Breast epithelium (tissue), 4 donors: ENCODE measurements at regions of chrX and their contacts with region 1.

Region 1: GRCh38 chrX:140229187-140229586 is 263.9 kb upstream of the CXorf66 start:
- DNase-seq: no peak
- H3K4me3 ChIP-seq: no peak overlapping the region
- H3K27ac ChIP-seq: no peak overlapping the region
- H3K4me1 ChIP-seq: no peaks in the 10 kb centered on the region
- H3K27me3 ChIP-seq: no peaks in the 10 kb centered on the region
- CTCF ChIP-seq: no peak
- POLR2A ChIP-seq: no peak

Region 2: GRCh38 chrX:140040430-140040829 is 188.8 kb before region 1 on chrX:
- intact Hi-C with region 1: loop called (anchors 10 kb)
- DNase-seq: no peak
- H3K4me3 ChIP-seq: no peak overlapping the region
- H3K27ac ChIP-seq: no peak overlapping the region
- H3K4me1 ChIP-seq: no peaks in the 10 kb centered on the region
- H3K27me3 ChIP-seq: peaks cover 0 to 9% of the 10 kb centered on the region in 2 donors
- CTCF ChIP-seq: no peak
- POLR2A ChIP-seq: no peak

Region 3: GRCh38 chrX:140104760-140105159 is 124.4 kb before region 1 on chrX:
- intact Hi-C with region 1: loop called (anchors 10 kb)
- DNase-seq: no peak
- H3K4me3 ChIP-seq: no peak overlapping the region
- H3K27ac ChIP-seq: no peak overlapping the region
- H3K4me1 ChIP-seq: no peaks in the 10 kb centered on the region
- H3K27me3 ChIP-seq: peaks cover 0 to 39% of the 10 kb centered on the region in 2 donors
- CTCF ChIP-seq: no peak
- POLR2A ChIP-seq: no peak